OCI-LY7 (cell line): ENCODE measurements at regions of chr7 and their contacts with region 1.

Region 1: DNA sequence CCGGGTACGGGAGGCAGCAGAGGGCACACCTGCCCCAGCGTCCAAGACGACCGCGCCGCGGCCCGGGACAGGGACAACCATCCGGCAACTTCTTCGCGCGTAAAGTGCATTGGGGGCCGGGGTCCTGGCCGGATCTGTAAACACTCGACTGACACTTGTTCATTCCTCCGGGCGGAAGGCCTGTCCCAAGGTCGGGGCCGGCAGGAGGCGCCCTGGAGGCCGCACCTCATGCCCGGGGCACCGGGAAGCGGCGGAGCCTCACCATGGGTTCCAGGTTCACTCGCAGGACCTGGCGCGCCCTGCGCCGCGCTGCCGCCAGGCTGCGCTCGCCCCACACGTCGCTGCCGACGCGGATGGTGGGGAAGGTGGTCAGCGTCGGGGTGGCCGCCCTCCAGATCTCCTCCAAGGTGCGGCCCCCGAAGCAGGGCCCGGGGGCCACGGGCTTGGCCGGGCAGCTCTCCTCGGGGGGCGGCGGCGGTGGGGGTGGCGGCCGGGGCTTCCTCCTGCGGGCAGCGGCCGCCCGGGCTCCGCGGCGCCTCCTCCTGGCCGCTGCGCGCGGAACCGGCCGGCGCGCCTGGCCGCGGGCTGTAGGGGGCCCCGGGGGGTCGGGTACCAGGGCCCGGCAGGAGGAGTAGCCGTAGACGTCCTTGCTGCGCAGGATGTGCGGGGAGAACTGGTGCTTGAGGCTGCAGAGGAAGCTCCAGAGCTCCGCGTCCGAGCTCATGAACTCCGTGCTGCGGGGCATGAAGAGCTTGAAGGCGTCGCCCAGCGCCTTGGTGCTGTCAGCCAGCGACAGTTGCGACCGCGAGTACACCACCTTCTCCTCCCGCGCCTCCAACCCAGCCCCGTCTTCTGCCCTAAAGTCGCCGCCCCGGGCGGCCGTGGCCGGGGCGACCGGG is 746 bp downstream of the CCDC71L start:
- DNase-seq: peak; percentile 89
- H3K4me3 ChIP-seq: peak overlapping the region; percentile 82
- H3K27ac ChIP-seq: peak overlapping the region; percentile 70
- H3K4me1 ChIP-seq: peaks cover 9% of the 10 kb centered on the region
- CTCF ChIP-seq: peak; percentile 83

Region 2: DNA sequence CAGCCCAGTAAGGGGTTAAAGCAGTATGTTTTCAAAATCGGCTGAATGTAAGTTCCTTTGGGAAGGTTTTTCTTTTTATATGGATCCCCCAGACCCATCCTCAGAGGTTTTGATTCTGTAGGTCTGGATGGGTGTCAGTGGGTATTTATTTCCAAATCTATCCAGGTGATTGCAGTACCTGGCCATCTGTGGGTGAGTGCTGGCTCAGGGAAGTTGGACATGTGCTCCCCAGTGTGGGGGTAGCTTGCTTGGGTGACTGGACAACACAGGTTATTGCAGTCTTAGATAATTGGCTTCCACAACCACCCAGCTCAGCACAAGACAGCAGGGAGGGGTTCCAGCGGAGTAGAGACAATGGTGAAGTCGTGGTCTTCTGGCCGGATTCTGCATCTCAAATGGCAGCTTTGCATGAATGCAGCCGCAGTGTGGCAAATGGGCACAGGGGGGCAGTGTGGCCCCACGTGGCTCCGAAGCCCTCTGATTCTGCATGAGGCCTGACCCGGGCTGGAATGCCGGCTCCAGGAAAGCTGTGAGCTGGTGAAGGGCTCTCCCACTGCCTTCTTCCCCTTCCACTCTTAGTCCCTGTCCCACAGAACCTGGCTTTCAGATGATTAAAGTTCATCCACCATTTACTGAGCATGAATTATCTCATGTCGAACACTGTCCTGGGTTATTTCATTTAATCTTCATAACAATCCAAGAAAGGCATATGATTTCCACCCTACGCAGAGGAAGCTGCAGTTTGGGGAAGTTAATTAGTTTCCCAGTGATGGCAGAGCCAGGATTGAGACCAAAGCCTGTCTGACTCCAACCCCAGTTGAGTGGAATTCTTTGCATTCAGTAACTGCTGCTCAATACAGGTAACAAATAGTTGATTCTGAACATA is 483.6 kb before region 1 on chr7:
- CTCF ChIA-PET with region 1: interaction called, 4 read pairs
- POLR2A ChIA-PET with region 1: interaction called, 5 read pairs
- intact Hi-C with region 1: loop called (anchors 2 kb)
- DNase-seq: peak; percentile 78
- H3K4me3 ChIP-seq: no peak overlapping the region
- H3K27ac ChIP-seq: peak overlapping the region; percentile 43
- H3K4me1 ChIP-seq: peaks cover 49% of the 10 kb centered on the region
- CTCF ChIP-seq: peak; percentile 98

Region 3: GRCh38 chr7:106285051-106285854 is 375.0 kb before region 1 on chr7:
- CTCF ChIA-PET with region 1: no interaction called
- POLR2A ChIA-PET with region 1: interaction called, 3 read pairs
- intact Hi-C with region 1: loop called (anchors 2 kb)
- DNase-seq: peak; percentile 95
- H3K4me3 ChIP-seq: peak overlapping the region; percentile 90
- H3K27ac ChIP-seq: peak overlapping the region; percentile 61
- H3K4me1 ChIP-seq: peaks cover 23% of the 10 kb centered on the region
- CTCF ChIP-seq: no peak

Region 4: GRCh38 chr7:106542550-106543220 is 117.5 kb before region 1 on chr7:
- CTCF ChIA-PET with region 1: interaction called, 3 read pairs
- POLR2A ChIA-PET with region 1: interaction called, 4 read pairs
- intact Hi-C with region 1: loop called (anchors 1 kb)
- DNase-seq: peak; percentile 51
- H3K4me3 ChIP-seq: no peak overlapping the region
- H3K27ac ChIP-seq: no peak overlapping the region
- H3K4me1 ChIP-seq: no peaks in the 10 kb centered on the region
- CTCF ChIP-seq: peak; percentile 80

Region 5: GRCh38 chr7:106583101-106583500 is 77.1 kb before region 1 on chr7:
- CTCF ChIA-PET with region 1: no interaction called
- POLR2A ChIA-PET with region 1: no interaction called
- intact Hi-C with region 1: no loop called
- DNase-seq: no peak
- H3K4me3 ChIP-seq: no peak overlapping the region
- H3K27ac ChIP-seq: no peak overlapping the region
- H3K4me1 ChIP-seq: no peaks in the 10 kb centered on the region
- CTCF ChIP-seq: no peak

Region 6: GRCh38 chr7:106598663-106599342 is 61.4 kb before region 1 on chr7:
- CTCF ChIA-PET with region 1: no interaction called
- POLR2A ChIA-PET with region 1: interaction called, 12 read pairs
- intact Hi-C with region 1: loop called (anchors 2 kb)
- DNase-seq: peak; percentile 69
- H3K4me3 ChIP-seq: no peak overlapping the region
- H3K27ac ChIP-seq: no peak overlapping the region
- H3K4me1 ChIP-seq: peaks cover 3% of the 10 kb centered on the region
- CTCF ChIP-seq: no peak

Region 7: DNA sequence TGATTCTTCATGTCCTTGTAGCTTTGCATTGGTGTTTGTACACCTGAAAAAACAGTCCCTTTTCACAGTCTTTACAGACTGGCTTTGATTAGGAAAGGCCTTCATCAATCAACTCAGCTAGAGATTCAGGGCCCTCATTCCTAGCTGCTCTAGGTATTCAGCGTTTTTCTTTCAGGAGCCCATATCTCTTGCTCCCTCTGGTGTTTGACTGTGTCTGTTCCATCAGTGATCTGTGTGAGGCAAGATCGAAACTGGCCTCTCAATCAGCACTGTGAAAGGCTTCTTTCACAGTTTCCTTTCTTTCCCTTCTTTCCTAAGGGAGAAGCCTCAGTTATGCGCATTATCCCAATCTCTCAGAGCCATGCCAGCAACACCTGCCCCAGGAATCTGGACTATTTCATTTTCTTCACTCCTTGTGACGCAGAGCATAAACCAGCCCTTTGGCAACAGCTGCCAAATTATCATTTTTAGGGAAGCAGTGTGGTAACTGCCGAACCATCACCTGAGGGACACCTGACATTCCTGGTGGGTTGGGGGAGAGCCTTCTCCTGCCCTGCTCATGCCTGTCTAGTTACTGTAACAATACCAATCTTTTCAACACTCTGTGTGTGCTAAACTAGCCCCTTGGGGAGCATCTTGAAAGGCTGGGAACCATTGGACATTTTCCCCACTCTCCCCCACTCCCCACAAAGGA is 76.4 kb after region 1 on chr7:
- CTCF ChIA-PET with region 1: interaction called, 6 read pairs
- POLR2A ChIA-PET with region 1: interaction called, 4 read pairs
- intact Hi-C with region 1: loop called (anchors 1 kb)
- DNase-seq: peak; percentile 57
- H3K4me3 ChIP-seq: no peak overlapping the region
- H3K27ac ChIP-seq: no peak overlapping the region
- H3K4me1 ChIP-seq: peaks cover 5% of the 10 kb centered on the region
- CTCF ChIP-seq: peak; percentile 74

Region 8: GRCh38 chr7:106779877-106780276 is 119.7 kb after region 1 on chr7:
- CTCF ChIA-PET with region 1: no interaction called
- POLR2A ChIA-PET with region 1: no interaction called
- intact Hi-C with region 1: loop called (anchors 5 kb)
- DNase-seq: peak; percentile 24
- H3K4me3 ChIP-seq: no peak overlapping the region
- H3K27ac ChIP-seq: no peak overlapping the region
- H3K4me1 ChIP-seq: no peaks in the 10 kb centered on the region
- CTCF ChIP-seq: peak; percentile 55; the same call in 1 of the 2 replicates

Region 9: GRCh38 chr7:106947244-106947728 is 287.1 kb after region 1 on chr7:
- CTCF ChIA-PET with region 1: no interaction called
- POLR2A ChIA-PET with region 1: no interaction called
- intact Hi-C with region 1: no loop called
- DNase-seq: peak; percentile 92
- H3K4me3 ChIP-seq: no peak overlapping the region
- H3K27ac ChIP-seq: no peak overlapping the region
- H3K4me1 ChIP-seq: peaks cover 18% of the 10 kb centered on the region
- CTCF ChIP-seq: peak; percentile 99

Region 10: DNA sequence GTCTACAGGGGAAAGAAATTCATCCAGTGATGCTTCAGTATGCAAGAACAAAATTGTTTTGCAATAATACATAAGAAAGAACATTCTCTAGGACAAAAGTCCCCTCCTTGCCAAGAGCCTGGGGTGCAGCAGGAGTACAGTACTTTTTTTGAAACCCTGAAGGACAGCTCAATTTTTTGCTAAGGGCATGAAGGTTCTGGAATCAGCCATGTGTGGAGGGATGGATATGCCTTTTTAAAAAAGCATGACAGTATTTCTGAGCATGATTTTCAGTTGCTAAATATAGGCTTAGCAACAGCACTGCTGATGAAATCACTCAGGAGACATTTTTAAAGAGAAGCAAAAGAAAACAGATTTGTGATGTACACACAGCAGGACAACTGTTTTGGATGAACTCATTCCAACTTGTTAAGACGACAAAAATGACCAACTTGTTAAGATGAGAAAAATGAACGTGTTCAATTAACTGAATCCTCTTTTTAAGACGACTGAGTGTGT is 547.9 kb after region 1 on chr7:
- CTCF ChIA-PET with region 1: no interaction called
- POLR2A ChIA-PET with region 1: no interaction called
- intact Hi-C with region 1: no loop called
- DNase-seq: peak; percentile 4
- H3K4me3 ChIP-seq: no peak overlapping the region
- H3K27ac ChIP-seq: no peak overlapping the region
- H3K4me1 ChIP-seq: peaks cover 7% of the 10 kb centered on the region
- CTCF ChIP-seq: no peak